ENCODE measurements at regions of chrX and their contacts with region 1.

Region 1: DNA sequence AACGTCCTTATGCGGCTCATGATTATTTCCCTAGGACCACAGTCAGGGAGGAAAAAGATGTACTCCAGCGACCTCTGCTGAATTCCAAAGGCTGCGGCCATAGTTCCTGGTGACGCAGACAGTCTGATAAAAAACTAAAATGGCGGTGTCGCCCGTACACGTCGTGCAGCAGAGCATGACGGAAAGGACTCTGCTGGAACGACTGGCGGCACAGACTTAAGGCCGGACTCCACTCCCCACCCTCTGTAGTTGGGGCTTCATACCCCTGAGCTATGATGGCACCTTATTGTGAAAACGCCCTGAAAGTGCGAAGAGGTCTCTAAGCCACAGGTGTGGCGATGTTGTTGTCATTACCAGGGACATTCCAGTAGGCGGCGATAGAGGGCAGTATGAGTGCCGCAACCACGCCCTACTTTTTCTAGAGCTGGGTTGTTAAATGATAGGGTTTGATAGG is 90.0 kb upstream of the EDA2R start:
- DNase-seq: peak; percentile 59
- ATAC-seq: peak; percentile 91
- H3K4me3 ChIP-seq: peak overlapping the region; percentile 97
- H3K27ac ChIP-seq: no peak overlapping the region
- H3K4me1 ChIP-seq: no peaks in the 10 kb centered on the region
- H3K27me3 ChIP-seq: no peaks in the 10 kb centered on the region
- CTCF ChIP-seq: peak; percentile 53
- POLR2A ChIP-seq: no peak
- RAD21 ChIP-seq: peak; percentile 69

Region 2: GRCh38 chrX:66200855-66201795 is 527.7 kb before region 1 on chrX:
- CTCF ChIA-PET with region 1: interaction called, 11 read pairs
- POLR2A ChIA-PET with region 1: no interaction called
- dilution Hi-C with region 1: no loop called
- in situ Hi-C with region 1: no loop called
- intact Hi-C with region 1: loop called (anchors 2 kb)
- DNase-seq: peak; percentile 17
- ATAC-seq: no peak
- H3K4me3 ChIP-seq: no peak overlapping the region
- H3K27ac ChIP-seq: no peak overlapping the region
- H3K4me1 ChIP-seq: no peaks in the 10 kb centered on the region
- H3K27me3 ChIP-seq: no peaks in the 10 kb centered on the region
- CTCF ChIP-seq: peak; percentile 47
- POLR2A ChIP-seq: no peak
- RAD21 ChIP-seq: peak; percentile 40

Region 3: DNA sequence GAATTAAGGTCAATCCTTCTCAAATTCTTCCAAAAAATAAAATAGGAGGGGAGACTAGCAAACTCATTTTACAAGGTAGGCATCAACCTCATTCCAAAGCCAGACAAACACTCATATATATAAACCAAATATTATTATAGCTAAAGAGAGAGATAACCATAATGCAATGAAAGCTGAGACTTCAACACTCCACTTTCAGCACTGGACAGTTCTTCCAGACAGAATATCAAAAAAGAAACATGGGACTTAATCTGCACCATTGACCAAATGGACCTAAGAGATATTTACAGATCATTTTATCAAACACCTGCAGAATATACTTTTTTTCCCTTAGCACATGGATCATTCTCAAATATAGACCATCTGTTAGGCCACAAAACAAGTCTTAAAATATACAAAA is 74.4 kb before region 1 on chrX:
- CTCF ChIA-PET with region 1: no interaction called
- POLR2A ChIA-PET with region 1: no interaction called
- dilution Hi-C with region 1: no loop called
- in situ Hi-C with region 1: no loop called
- intact Hi-C with region 1: no loop called
- DNase-seq: no peak
- ATAC-seq: no peak
- H3K4me3 ChIP-seq: no peak overlapping the region
- H3K27ac ChIP-seq: no peak overlapping the region
- H3K4me1 ChIP-seq: no peaks in the 10 kb centered on the region
- H3K27me3 ChIP-seq: no peaks in the 10 kb centered on the region
- CTCF ChIP-seq: no peak
- POLR2A ChIP-seq: no peak
- RAD21 ChIP-seq: no peak